ENCODE measurements at regions of chr10 and their contacts with region 1.

Region 1: DNA sequence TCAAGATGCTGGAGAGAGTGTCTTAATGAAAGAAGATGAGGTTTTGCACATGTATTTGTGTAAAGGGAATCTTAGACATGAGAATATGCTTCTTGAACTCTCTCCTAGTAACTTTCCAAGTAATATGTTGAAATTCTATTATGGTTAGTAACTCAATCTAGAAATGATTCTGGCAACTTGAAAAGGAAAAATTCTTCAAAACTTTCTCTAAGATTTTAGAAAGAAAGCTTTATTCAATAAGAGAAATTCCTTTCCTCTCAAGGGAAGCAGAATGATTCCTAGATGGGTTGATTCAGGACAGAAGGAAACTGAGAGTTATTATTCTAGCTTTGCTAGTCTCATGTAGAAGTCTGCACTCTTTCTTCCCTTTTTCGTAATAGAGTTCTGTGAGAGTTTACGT is 364.3 kb upstream of the PLXDC2 start:
- DNase-seq: no peak
- ATAC-seq: no peak
- H3K4me3 ChIP-seq: no peak overlapping the region
- H3K4me3 Mint-ChIP-seq: no peak overlapping the region
- H3K27ac ChIP-seq: no peak overlapping the region
- H3K27ac Mint-ChIP-seq: no peak overlapping the region
- H3K4me1 ChIP-seq: no peaks in the 10 kb centered on the region
- H3K4me1 Mint-ChIP-seq: no peaks in the 10 kb centered on the region
- H3K27me3 ChIP-seq: no peaks in the 10 kb centered on the region
- H3K27me3 Mint-ChIP-seq: no peaks in the 10 kb centered on the region
- CTCF ChIP-seq: no peak

Region 2: DNA sequence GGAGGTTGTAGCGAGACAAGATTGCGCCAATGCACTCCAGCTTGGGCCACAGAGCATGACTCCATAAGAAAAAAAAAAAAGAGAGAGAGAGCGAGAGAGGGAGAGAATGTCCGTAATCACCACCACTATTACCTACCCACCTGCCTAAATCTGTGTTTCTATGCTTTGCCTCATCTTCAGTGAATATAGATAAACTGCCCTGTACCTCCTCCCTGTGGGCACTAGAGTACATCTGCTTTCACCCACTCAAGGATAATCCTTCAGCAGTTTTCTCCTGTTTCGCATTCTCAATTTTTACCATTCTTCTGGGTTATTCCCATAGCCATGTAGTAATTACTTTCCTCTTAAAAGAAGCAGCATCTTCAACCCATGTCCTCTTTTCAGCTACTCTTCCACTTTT is 423.3 kb before region 1 on chr10:
- CTCF ChIA-PET with region 1: no interaction called
- POLR2A ChIA-PET with region 1: no interaction called
- intact Hi-C with region 1: no loop called
- DNase-seq: no peak
- ATAC-seq: no peak
- H3K4me3 ChIP-seq: no peak overlapping the region
- H3K4me3 Mint-ChIP-seq: no peak overlapping the region
- H3K27ac ChIP-seq: no peak overlapping the region
- H3K27ac Mint-ChIP-seq: no peak overlapping the region
- H3K4me1 ChIP-seq: no peaks in the 10 kb centered on the region
- H3K4me1 Mint-ChIP-seq: no peaks in the 10 kb centered on the region
- H3K27me3 ChIP-seq: no peaks in the 10 kb centered on the region
- H3K27me3 Mint-ChIP-seq: no peaks in the 10 kb centered on the region
- CTCF ChIP-seq: no peak

Region 3: GRCh38 chr10:19488592-19489280 is 36.8 kb after region 1 on chr10:
- CTCF ChIA-PET with region 1: no interaction called
- POLR2A ChIA-PET with region 1: no interaction called
- intact Hi-C with region 1: loop called in 1 of 2 experiments (anchors 1 kb)
- DNase-seq: peak in 2 of 9 experiments; percentile 0 to 4
- ATAC-seq: no peak
- H3K4me3 ChIP-seq: no peak overlapping the region
- H3K4me3 Mint-ChIP-seq: peak overlapping the region; percentile 33
- H3K27ac ChIP-seq: no peak overlapping the region
- H3K27ac Mint-ChIP-seq: no peak overlapping the region
- H3K4me1 ChIP-seq: no peaks in the 10 kb centered on the region
- H3K4me1 Mint-ChIP-seq: peaks cover 5% of the 10 kb centered on the region
- H3K27me3 ChIP-seq: no peaks in the 10 kb centered on the region
- H3K27me3 Mint-ChIP-seq: no peaks in the 10 kb centered on the region
- CTCF ChIP-seq: no peak